ENCODE measurements at regions of chr13 and their contacts with region 1.

Region 1: GRCh38 chr13:108289819-108290218 is 20.3 kb downstream of the TNFSF13B start:
- DNase-seq: no peak
- ATAC-seq: no peak
- H3K4me3 ChIP-seq: no peak overlapping the region
- H3K4me3 Mint-ChIP-seq: no peak overlapping the region
- H3K27ac ChIP-seq: no peak overlapping the region
- H3K27ac Mint-ChIP-seq: no peak overlapping the region
- H3K4me1 ChIP-seq: no peaks in the 10 kb centered on the region
- H3K4me1 Mint-ChIP-seq: no peaks in the 10 kb centered on the region
- H3K27me3 ChIP-seq: no peaks in the 10 kb centered on the region
- H3K27me3 Mint-ChIP-seq: no peaks in the 10 kb centered on the region
- CTCF ChIP-seq: no peak

Region 2: GRCh38 chr13:107721125-107721869 is 568.5 kb before region 1 on chr13:
- CTCF ChIA-PET with region 1: no interaction called
- POLR2A ChIA-PET with region 1: no interaction called
- intact Hi-C with region 1: no loop called
- DNase-seq: no peak
- ATAC-seq: no peak
- H3K4me3 ChIP-seq: no peak overlapping the region
- H3K4me3 Mint-ChIP-seq: no peak overlapping the region
- H3K27ac ChIP-seq: no peak overlapping the region
- H3K27ac Mint-ChIP-seq: no peak overlapping the region
- H3K4me1 ChIP-seq: no peaks in the 10 kb centered on the region
- H3K4me1 Mint-ChIP-seq: no peaks in the 10 kb centered on the region
- H3K27me3 ChIP-seq: no peaks in the 10 kb centered on the region
- H3K27me3 Mint-ChIP-seq: no peaks in the 10 kb centered on the region
- CTCF ChIP-seq: no peak

Region 3: GRCh38 chr13:108305655-108306054 is 15.8 kb after region 1 on chr13:
- CTCF ChIA-PET with region 1: no interaction called
- POLR2A ChIA-PET with region 1: no interaction called
- intact Hi-C with region 1: loop called (anchors 1 to 2 kb)
- DNase-seq: no peak
- ATAC-seq: no peak
- H3K4me3 ChIP-seq: no peak overlapping the region
- H3K4me3 Mint-ChIP-seq: no peak overlapping the region
- H3K27ac ChIP-seq: no peak overlapping the region
- H3K27ac Mint-ChIP-seq: peak overlapping the region; percentile 1
- H3K4me1 ChIP-seq: no peaks in the 10 kb centered on the region
- H3K4me1 Mint-ChIP-seq: peaks cover 20% of the 10 kb centered on the region
- H3K27me3 ChIP-seq: no peaks in the 10 kb centered on the region
- H3K27me3 Mint-ChIP-seq: no peaks in the 10 kb centered on the region
- CTCF ChIP-seq: no peak